ENCODE measurements at regions of chr1 and their contacts with region 1.

Region 1: DNA sequence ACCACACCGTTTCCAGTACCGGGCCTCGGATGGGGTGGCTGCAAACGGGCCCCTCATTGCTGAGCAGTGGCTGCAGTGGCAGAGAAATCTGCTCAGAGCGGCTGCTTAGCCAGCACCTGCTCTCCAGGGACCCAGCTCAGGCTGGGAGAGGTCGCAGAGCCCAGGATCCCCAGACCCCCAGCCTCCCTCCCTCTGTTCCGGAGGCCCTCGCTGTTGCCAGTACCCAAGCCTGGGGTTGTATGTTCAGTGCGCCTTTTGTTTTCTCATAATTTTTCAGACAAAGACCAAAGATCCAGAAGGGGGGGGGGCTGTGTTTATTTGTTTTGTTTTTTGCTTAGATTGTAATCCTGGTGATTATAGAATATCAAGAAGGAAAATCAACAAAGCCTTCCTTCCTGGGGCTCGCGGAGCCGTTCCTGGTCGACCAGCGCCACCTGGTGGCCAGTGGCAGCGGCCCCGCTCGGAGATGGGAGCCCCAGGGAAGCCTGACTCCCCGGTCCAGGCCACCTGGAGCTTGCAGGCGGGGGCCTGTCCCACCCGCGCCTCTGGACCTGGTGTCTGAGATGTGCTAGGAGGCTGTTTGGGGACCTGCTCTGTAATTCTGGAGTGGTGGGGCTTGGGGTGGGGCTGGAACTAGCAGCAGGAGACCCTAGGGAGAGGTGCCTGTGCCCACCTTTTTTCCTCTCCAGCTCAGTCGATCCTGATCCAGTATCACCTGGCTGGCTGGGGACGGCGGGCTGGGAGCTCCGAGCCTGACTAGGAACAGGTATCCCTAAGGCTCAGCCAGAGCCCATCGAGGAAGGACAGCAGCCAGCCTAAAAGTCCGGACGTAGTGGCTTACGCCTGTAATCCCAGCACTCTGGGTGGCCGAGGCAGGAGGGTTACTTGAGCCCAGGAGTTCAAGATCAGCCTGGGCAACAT is 123.9 kb upstream of the VAMP3 start:
- DNase-seq: peak; percentile 54
- H3K4me3 ChIP-seq: no peak overlapping the region
- H3K27ac ChIP-seq: no peak overlapping the region
- H3K4me1 ChIP-seq: no peaks in the 10 kb centered on the region
- H3K27me3 ChIP-seq: no peaks in the 10 kb centered on the region
- CTCF ChIP-seq: peak; percentile 88 to 95 (median 94)
- POLR2A ChIP-seq: no peak

Region 2: GRCh38 chr1:7042322-7043190 is 604.7 kb before region 1 on chr1:
- intact Hi-C with region 1: loop called (anchors 5 kb)
- DNase-seq: no peak
- H3K4me3 ChIP-seq: no peak overlapping the region
- H3K27ac ChIP-seq: no peak overlapping the region
- H3K4me1 ChIP-seq: no peaks in the 10 kb centered on the region
- H3K27me3 ChIP-seq: peaks cover 8% of the 10 kb centered on the region
- CTCF ChIP-seq: peak in 3 of 4 experiments; percentile 51 to 61 (median 58)
- POLR2A ChIP-seq: no peak

Region 3: DNA sequence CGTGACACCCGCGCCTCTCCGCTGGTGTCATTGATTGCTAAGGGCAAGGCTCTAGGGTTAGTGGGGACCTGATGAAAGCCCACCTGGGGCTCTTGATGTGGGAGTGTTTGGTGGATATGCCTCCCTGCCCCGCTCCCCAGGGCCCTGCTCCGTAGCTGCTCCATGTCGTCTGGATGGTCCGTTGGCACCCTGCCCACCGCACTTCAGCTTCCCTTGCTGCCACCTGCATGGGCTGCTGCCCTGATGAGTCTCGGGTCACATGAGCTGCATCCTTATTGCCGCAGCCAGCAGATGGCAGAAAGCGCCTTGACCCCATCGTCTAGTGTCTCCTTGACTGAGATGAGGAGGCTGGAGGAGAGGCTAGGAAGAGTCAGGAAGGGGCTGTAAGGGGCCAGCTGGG is 422.6 kb before region 1 on chr1:
- intact Hi-C with region 1: loop called (anchors 10 kb)
- DNase-seq: no peak
- H3K4me3 ChIP-seq: no peak overlapping the region
- H3K27ac ChIP-seq: no peak overlapping the region
- H3K4me1 ChIP-seq: no peaks in the 10 kb centered on the region
- H3K27me3 ChIP-seq: no peaks in the 10 kb centered on the region
- CTCF ChIP-seq: no peak
- POLR2A ChIP-seq: no peak